HepG2 (cell line): ENCODE measurements at regions of chr22 and their contacts with region 1.

Region 1: GRCh38 chr22:38506118-38506962 is at the start of gene DDX17:
- DNase-seq: peak; percentile 94
- ATAC-seq: peak; percentile 83
- H3K4me3 ChIP-seq: peak within 1 kb of the TSS; percentile 93 to 99 (median 96)
- H3K27ac ChIP-seq: peak within 1 kb of the TSS; percentile 97
- H3K4me1 ChIP-seq: peaks cover 63% of the 10 kb centered on the region
- H3K27me3 ChIP-seq: no peaks in the 10 kb centered on the region; a peak in 1 of 5 replicates
- CTCF ChIP-seq: no peak; the same call in none of the 2 replicates
- EP300 ChIP-seq: no peak
- POLR2A ChIP-seq: peak; percentile 82 to 92
- RAD21 ChIP-seq: no peak
- total RNA-seq, gene DDX17: 238 and 251 TPM in 2 replicates

Region 2: GRCh38 chr22:38461414-38462081 is 44.8 kb before region 1 on chr22:
- CTCF ChIA-PET with region 1: no interaction called
- POLR2A ChIA-PET with region 1: no interaction called
- in situ Hi-C with region 1: no loop called
- intact Hi-C with region 1: loop called (anchors 5 kb)
- DNase-seq: peak; percentile 71
- ATAC-seq: peak; percentile 60
- H3K4me3 ChIP-seq: peak overlapping the region in 1 of 3 experiments; percentile 52; a peak in 1 of 6 replicates
- H3K27ac ChIP-seq: no peak overlapping the region
- H3K4me1 ChIP-seq: peaks cover 63% of the 10 kb centered on the region
- H3K27me3 ChIP-seq: peaks cover under 1 to 45% of the 10 kb centered on the region in 2 experiments; a peak in 3 of 5 replicates
- CTCF ChIP-seq: peak; percentile 47
- EP300 ChIP-seq: no peak
- POLR2A ChIP-seq: no peak
- RAD21 ChIP-seq: no peak

Region 3: DNA sequence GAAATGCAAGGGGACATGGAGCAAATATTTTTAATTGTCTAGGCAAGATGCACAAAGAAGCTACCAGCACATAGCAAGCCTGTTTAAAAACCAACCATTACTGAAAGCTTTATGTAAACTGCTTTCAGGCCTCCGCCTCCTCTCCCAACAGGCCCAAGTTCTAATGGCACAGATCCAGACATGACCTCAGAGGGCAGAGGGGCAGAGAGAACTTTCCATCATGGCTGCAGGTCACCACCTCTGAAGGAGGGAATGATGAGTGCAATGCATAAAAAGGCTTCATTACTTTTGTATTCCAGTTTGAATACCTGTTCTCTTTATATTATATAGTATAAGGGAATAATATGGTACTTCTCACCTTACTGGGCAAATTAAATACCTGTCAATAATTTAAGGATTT is 15.4 kb before region 1 on chr22:
- CTCF ChIA-PET with region 1: no interaction called
- POLR2A ChIA-PET with region 1: interaction called, 16 read pairs
- in situ Hi-C with region 1: no loop called
- intact Hi-C with region 1: no loop called
- DNase-seq: peak; percentile 83
- ATAC-seq: peak; percentile 58
- H3K4me3 ChIP-seq: no peak overlapping the region
- H3K27ac ChIP-seq: peak overlapping the region; percentile 34
- H3K4me1 ChIP-seq: peaks cover 34% of the 10 kb centered on the region
- H3K27me3 ChIP-seq: no peaks in the 10 kb centered on the region
- CTCF ChIP-seq: no peak
- EP300 ChIP-seq: no peak
- POLR2A ChIP-seq: no peak
- RAD21 ChIP-seq: no peak